ENCODE measurements at regions of chr1 and their contacts with region 1.

Region 1: DNA sequence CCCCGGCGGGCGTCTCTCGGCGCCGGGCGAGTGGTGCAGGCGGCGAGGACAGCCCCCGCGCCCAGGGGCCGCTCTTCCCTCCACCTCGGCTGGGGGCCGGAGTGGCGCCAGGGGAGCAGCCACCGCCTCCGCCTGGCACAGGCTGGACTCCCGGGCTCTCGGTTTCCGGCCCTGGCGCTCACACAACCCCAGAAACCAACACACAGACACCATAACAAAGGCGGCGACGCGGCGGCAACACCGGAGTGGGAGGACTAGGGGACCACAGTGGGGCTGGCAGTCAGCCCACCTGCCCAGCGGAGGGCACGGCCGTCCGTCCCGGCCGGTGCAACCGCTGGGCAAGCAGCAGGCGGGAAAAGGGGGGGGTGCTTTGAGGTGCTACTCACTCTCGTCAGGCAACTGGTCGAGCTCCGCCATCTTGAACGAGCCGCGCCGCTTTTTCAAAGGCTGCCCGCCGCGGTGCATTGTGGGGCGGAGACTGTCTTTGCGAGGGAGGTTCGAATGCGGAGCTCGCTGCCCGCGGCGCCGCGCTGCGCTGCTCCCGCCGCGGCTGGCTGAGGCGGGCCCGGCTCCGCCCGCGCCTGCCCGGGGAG is at the start of gene LIN9:
- H3K4me3 ChIP-seq: peak within 1 kb of the TSS; percentile 81
- H3K27ac ChIP-seq: peak within 1 kb of the TSS; percentile 96
- H3K4me1 ChIP-seq: peaks cover 8% of the 10 kb centered on the region; the same call in 1 of the 2 replicates
- CTCF ChIP-seq: peak; percentile 93

Region 2: DNA sequence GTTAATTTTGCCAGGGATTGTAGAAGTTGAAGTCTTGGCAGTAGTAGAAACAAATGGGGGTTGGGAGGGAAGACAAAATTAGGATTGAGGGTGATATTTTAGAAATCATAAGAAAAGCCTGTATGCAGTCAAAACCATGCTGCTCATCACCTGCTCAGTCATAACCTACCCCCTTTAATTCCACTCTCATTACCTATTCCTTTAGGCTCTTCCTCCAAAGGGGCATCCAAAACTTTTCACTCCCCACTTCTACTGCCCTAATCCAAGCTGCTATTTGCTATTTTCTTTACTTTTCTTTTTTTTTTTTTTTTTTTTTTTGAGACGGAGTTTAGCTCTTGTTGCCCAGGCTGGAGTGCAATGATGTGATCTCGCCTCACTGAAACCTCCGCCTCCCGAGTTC is 234.8 kb before region 1 on chr1:
- CTCF ChIA-PET with region 1: no interaction called
- POLR2A ChIA-PET with region 1: no interaction called
- H3K4me3 ChIP-seq: no peak overlapping the region
- H3K27ac ChIP-seq: no peak overlapping the region
- H3K4me1 ChIP-seq: no peaks in the 10 kb centered on the region
- CTCF ChIP-seq: no peak

Region 3: DNA sequence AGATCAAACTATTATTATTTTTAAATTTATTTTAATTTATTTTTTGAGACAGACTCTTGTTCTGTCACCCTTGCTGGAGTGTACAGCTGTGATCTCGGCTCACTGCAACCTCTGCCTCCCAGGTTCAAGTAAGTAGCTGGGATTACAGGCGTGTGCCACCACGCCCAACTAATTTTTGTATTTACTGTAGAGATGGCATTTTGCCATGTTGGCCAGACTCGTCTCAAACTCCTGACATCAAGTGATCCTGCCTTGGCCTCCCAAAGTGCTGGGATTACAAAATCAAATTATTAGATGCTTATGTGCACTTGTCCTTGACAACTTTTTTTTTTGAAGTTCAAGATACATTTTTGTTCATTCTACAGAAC is 15.3 kb before region 1 on chr1:
- CTCF ChIA-PET with region 1: interaction called, 13 read pairs
- POLR2A ChIA-PET with region 1: interaction called, 16 read pairs
- H3K4me3 ChIP-seq: no peak overlapping the region
- H3K27ac ChIP-seq: no peak overlapping the region
- H3K4me1 ChIP-seq: peaks cover 4% of the 10 kb centered on the region
- CTCF ChIP-seq: no peak

Region 4: DNA sequence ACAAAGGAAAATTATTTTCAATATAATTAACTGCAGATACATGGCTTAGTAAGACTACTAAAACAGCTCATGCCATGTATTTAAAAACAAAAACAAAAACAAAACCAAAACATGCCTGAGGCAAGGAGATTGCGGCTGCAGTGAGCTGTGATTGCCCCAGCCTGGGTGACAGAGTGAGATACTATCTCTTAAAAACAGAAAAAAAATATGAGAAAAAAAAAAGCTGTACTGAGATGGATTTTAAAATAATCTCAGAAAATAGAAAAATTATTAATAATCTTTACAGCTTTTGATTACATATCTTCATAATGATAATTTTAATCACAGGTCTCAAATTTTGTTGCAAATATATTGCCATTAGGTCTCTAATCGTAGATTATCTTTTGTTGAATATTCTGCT is 24.1 kb after region 1 on chr1:
- CTCF ChIA-PET with region 1: interaction called, 32 read pairs
- POLR2A ChIA-PET with region 1: interaction called, 38 read pairs
- H3K4me3 ChIP-seq: peak overlapping the region; percentile 25; the same call in 1 of the 2 replicates
- H3K27ac ChIP-seq: no peak overlapping the region
- H3K4me1 ChIP-seq: peaks cover 3% of the 10 kb centered on the region; the same call in 1 of the 2 replicates
- CTCF ChIP-seq: no peak

Region 5: DNA sequence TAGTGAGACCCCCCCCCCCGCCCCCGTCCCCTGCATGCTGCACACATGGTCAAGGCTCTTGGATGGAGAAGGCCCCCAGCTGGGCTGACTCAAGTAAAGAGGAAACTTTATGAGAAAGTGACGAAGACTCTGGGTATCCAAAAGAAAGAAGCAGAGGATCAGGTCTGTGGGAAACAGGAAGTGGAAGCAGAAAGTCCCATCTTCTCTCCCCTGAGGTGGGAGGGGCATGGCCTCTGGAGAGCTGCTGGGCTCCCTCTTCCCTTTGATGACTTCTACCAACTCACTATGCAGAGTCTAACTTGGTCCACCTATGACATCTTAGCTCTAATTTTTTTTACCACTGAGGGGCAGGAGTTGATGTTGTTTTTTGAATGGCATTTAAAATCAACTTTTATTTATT is 42.9 kb after region 1 on chr1:
- CTCF ChIA-PET with region 1: no interaction called
- POLR2A ChIA-PET with region 1: no interaction called
- H3K4me3 ChIP-seq: no peak overlapping the region
- H3K27ac ChIP-seq: no peak overlapping the region
- H3K4me1 ChIP-seq: no peaks in the 10 kb centered on the region; the same call in 1 of the 2 replicates
- CTCF ChIP-seq: no peak

Region 6: DNA sequence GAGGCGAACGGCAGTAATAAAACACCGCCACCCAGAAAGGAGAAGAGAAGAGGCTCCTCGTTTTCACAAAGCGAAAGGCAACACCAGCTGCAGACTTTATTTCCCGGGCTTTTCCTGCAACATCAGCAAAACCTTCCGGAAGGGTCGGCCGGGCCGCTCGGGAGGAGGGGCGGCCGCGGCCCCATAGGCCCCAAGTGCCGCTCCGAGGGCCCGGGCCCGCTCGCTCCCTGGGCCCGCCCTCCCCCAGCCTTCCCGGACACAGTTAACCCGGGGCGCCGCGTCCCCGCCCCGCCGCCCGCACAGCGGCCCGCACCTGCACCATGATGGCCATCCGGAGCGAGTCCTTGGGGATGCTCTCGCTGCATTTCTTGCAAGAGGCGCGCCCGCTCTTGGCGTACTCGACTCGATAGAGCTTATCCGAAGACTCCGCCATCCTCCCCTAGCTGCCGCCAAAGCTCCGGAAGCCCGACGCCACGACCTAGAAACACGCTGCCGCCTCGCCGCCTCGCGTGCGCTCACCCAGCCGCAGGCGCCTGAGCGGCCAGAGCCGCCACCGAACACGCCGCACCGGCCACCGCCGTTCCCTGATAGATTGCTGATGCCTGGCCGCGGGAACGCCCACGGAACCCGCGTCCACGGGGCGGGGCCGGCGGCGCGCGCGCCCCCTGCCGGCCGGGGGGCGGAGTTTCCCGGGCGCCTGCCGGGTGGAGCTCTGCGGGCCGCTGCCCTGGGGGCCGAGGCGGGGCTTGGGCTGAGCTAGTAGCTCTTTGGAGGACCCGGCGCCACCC is 98.9 kb after region 1 on chr1 and contains the start of gene PARP1:
- CTCF ChIA-PET with region 1: no interaction called
- POLR2A ChIA-PET with region 1: interaction called, 14 read pairs
- H3K4me3 ChIP-seq: peak within 1 kb of the TSS; percentile 71
- H3K27ac ChIP-seq: peak within 1 kb of the TSS; percentile 95
- H3K4me1 ChIP-seq: peaks cover 23% of the 10 kb centered on the region
- CTCF ChIP-seq: peak; percentile 74

Measured in HEK293 (cell line).